Heart left ventricle (tissue), 16 donors: ENCODE measurements at regions of chr4 and their contacts with region 1.

Region 1: DNA sequence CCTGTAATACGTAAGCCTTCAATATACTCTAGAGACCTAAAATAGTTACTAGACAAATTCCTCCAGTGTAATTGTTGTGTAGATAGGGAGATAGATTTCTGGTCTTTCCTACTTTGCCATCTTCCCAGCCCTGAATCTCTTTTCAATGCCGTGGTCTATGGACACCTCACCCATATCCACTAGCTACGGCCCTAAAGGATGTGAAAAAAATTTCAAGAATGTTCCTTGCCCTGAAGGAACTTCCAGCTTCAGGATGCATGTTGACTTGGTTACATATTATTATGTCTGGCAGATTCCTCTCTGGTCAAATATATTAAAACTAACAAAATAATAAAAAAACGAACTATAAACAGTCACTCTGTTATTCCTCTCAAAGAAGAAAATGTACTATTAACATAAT is 52.4 kb upstream of the TSPAN5 start:
- DNase-seq: no peak
- ATAC-seq: no peak
- H3K4me3 ChIP-seq: no peak overlapping the region
- H3K27ac ChIP-seq: no peak overlapping the region
- H3K4me1 ChIP-seq: no peaks in the 10 kb centered on the region
- H3K27me3 ChIP-seq: no peaks in the 10 kb centered on the region
- CTCF ChIP-seq: no peak
- POLR2A ChIP-seq: no peak

Region 2: DNA sequence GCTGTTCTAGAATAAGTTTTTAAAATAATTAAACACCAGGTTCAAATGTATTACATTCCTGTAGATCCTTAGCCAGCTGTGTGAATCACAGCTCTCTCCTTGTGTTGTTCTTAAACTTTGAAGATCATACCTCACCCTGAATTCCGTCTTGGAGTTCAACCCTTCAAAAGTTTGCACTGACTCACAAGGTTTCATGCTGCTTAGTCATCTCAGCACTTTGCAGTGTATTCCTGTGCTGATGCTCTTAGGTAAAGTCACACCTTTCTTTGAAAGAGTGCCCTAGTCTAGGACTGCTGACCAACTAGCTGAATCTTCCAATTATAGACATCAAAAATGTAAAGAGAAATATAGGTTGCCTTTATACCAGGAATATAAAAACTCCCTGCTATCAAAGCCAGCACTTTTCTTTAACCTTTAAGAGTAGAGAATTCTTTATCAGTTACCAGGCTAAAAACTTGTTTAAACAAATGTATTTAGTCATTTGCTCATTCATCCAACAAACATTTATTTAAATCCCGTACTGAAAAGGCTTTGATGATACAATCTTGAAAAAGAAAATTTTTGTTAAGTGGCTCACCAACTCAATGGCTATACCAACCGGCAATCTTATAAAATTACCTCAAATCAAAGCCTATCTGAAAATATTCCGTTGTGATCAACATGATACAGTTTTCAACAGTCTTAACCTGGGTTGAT is 280.0 kb before region 1 on chr4:
- intact Hi-C with region 1: no loop called
- DNase-seq: no peak
- ATAC-seq: no peak
- H3K4me3 ChIP-seq: no peak overlapping the region
- H3K27ac ChIP-seq: no peak overlapping the region
- H3K4me1 ChIP-seq: no peaks in the 10 kb centered on the region
- H3K27me3 ChIP-seq: no peaks in the 10 kb centered on the region
- CTCF ChIP-seq: no peak
- POLR2A ChIP-seq: no peak

Region 3: DNA sequence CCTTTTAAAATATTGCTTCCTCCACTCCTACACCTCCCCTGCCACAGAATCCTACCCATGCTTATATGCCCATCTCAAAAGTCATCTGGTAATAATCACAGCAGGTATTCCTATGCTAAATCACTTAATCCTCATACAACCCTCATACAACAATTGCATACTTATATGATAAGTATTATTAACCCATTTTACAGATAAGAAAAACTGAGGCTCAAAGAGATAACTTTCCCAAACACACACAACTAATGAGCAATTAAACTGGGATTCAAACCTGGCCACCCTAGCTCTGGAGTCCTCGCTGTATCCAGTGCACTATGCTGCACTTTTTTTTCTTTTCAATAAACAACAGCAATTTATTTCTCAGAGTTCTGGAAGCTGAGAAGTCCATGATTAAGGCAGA is 47.4 kb after region 1 on chr4:
- intact Hi-C with region 1: loop called in 1 of 10 experiments (anchors 2 kb)
- DNase-seq: no peak
- ATAC-seq: no peak
- H3K4me3 ChIP-seq: no peak overlapping the region
- H3K27ac ChIP-seq: no peak overlapping the region
- H3K4me1 ChIP-seq: no peaks in the 10 kb centered on the region
- H3K27me3 ChIP-seq: no peaks in the 10 kb centered on the region
- CTCF ChIP-seq: no peak
- POLR2A ChIP-seq: no peak